ENCODE measurements at regions of chr12 and their contacts with region 1.

Region 1: GRCh38 chr12:3119748-3120601 is 42.8 kb downstream of the TSPAN9 start:
- DNase-seq: peak in 5 of 7 donors; percentile 60 to 90 (median 70)
- H3K4me3 ChIP-seq: no peak overlapping the region
- H3K27ac ChIP-seq: peak overlapping the region in 4 of 5 donors; percentile 54 to 88 (median 72)
- H3K4me1 ChIP-seq: peaks cover 11 to 39% of the 10 kb centered on the region in 2 donors
- H3K27me3 ChIP-seq: no peaks in the 10 kb centered on the region
- CTCF ChIP-seq: no peak
- POLR2A ChIP-seq: no peak

Region 2: DNA sequence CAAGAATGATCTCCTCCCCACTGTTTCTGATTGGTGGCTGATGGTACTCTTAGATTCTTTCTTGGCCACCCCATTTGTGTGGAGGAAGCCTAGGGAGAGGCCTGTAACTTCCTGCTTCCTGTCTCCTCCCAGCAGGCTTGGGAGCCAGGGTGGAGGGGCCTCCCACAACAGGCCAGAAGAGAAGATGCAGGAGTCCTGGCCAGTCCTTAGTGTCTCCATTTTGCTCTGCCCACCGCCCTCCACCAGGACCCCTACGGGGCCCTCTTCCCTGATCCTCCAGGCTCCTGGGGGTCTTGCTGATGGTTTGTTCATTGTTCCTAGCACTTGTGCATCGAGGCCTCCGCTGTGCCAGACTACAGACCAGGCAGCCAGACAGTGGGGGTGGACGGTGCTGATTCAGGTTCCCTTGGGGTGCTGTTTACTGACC is 36.0 kb before region 1 on chr12:
- intact Hi-C with region 1: loop called in 1 of 2 experiments (anchors 5 kb)
- DNase-seq: no peak
- H3K4me3 ChIP-seq: no peak overlapping the region
- H3K27ac ChIP-seq: peak overlapping the region in 1 of 5 donors; percentile 6
- H3K4me1 ChIP-seq: no peaks in the 10 kb centered on the region
- H3K27me3 ChIP-seq: no peaks in the 10 kb centered on the region
- CTCF ChIP-seq: no peak
- POLR2A ChIP-seq: no peak

Region 3: DNA sequence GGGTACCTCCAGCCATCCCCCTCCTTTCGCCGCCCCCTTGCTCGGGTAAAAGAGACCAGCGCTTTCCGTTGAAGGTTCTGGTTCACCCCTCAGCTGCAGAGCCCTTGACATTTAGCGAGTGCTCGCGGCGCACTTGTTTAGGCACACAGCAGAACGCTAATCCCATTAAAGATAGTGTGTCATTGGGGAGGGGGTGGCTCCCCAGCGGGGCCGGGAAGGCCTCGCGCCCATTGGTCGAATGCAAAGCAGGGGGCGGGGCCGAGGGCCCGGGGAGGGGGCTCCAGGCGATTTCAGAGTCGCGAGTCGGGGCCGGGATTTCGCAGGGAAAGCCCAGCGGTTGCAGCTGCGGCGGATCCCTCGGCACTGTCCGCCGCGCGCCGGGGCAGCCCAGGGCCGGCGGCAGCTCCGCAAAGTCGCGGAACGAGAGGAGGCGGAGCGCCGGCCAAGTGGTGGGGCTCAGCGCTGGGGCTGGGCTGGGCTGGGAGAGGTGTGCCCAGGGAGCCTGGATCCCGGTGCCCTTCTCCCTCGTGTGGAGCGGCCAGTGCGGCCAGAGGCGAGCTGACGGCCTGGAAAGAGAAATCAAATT is 80.2 kb after region 1 on chr12:
- intact Hi-C with region 1: no loop called
- DNase-seq: peak; percentile 43 to 64 (median 50)
- H3K4me3 ChIP-seq: peak overlapping the region in 2 of 4 donors; percentile 7 to 53
- H3K27ac ChIP-seq: no peak overlapping the region
- H3K4me1 ChIP-seq: peaks cover 16 to 24% of the 10 kb centered on the region in 2 donors
- H3K27me3 ChIP-seq: no peaks in the 10 kb centered on the region
- CTCF ChIP-seq: no peak
- POLR2A ChIP-seq: no peak

Measured in adrenal gland (tissue), 19 donors.